ENCODE measurements at regions of chr12 and their contacts with region 1.

Region 1: DNA sequence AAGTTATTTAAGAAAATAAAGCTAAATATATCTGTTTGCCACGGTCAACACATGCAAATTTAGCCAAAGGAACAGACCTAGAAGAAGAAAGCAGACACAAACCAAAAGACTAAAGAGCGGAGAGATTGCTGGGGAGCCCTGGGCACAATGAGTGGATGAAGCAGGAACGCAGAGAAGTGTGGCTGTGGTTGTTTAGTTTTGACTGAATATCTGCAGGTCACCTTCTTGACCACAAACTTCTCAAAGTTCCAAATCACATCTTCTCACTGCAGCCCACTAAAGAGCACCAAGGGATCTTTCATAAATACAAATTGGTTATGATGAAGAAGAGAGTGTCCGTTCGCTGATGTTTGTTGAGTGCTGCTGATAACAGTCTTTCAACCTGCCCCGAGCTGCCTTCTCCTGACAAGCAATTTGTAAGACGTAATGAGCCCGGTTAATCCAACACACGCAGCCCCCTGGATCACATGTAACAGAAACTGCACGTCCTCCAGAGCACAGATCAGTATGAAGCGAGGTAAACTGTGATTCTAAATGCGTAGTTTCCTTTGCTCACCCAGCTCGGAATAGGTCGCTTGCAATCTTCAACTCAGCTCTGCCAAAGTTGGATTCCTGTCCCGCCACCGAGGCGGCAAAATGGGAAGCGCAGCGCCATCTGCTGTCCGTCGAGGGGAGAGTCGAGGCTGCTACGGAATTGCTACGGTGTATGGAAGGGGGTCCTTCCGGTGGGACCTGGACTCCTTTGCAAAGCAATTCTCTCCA is 120.8 kb downstream of the GXYLT1 start:
- DNase-seq: peak; percentile 12 to 86
- H3K4me3 ChIP-seq: peak overlapping the region; percentile 58 to 71
- H3K27ac ChIP-seq: no peak overlapping the region
- H3K4me1 ChIP-seq: no peaks in the 10 kb centered on the region
- H3K27me3 ChIP-seq: no peaks in the 10 kb centered on the region
- CTCF ChIP-seq: peak; percentile 73 to 96 (median 90)

Region 2: DNA sequence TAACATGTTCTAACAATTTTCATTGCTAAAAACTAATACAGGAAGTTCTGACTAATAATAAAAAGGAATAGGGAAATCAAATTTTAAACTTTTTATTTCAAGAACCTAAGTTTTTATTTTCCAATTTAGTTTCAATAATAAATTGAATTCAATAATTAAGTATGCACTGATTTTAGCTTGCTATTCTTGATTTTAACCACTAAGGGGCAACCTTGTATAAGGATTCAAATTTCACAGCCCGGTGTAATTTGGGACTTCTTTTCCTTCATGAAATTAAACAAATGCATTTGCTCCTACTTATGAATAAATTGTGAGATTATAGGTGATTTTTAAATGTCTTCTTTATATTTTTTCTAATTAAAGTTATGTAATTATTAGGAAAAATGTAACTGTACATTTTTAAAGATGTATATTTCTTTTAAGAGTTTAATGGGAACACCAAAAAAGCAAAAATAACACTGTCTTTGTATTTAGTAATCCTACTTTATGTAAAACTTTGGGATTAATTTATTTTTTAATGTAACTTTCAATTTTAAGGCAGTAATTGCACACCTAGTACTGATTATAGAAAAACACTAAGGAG is 1077.2 kb before region 1 on chr12:
- intact Hi-C with region 1: loop called (anchors 2 kb)
- DNase-seq: no peak
- H3K4me3 ChIP-seq: no peak overlapping the region
- H3K27ac ChIP-seq: no peak overlapping the region
- H3K4me1 ChIP-seq: no peaks in the 10 kb centered on the region
- H3K27me3 ChIP-seq: no peaks in the 10 kb centered on the region
- CTCF ChIP-seq: peak in 2 of 3 experiments; percentile 67 to 74

Region 3: GRCh38 chr12:41190338-41190737 is 833.6 kb before region 1 on chr12:
- intact Hi-C with region 1: loop called (anchors 10 kb)
- DNase-seq: no peak
- H3K4me3 ChIP-seq: peak overlapping the region; percentile 65 to 96
- H3K27ac ChIP-seq: peak overlapping the region; percentile 74 to 87
- H3K4me1 ChIP-seq: peaks cover 0 to 3% of the 10 kb centered on the region in 2 donors
- H3K27me3 ChIP-seq: no peaks in the 10 kb centered on the region
- CTCF ChIP-seq: peak in 2 of 3 experiments; percentile 51 to 65

Region 4: DNA sequence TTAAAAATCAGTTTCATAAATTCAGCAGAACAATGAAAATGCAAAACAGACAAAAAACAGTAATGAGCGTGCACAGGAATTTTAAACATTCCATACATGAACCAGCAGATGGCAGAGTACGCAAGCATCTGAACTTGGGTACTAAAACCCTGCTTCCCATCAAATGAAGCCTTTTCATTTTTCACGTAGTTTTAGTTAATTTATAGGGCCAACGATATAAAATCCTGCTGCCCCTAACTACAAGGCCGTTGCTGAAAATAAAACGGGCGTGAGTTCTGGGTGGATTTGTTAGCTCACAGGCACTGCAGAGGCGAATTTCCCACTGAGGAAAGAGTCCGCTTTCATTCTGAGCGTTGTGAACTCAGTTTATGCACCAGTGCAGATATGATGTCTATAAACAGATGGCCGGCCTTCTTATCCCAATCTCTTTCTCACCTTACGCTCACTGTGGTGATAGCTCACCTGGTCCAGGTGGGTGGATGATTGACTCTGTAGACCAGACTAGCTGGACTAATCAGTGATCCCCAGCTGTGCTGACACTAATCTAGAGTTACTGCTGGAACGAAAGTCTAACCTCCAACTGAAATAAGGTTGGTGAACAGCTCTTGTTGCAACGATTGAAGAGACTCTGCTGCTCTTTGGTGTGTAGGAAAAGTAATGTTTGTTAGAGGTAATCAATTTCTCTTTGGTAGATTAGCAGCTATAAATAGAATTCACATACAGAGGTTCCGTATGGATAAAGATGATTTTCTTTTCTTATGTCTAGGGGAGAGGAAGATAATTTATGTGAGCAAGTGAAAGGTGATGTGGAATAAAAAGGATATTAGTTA is 746.6 kb before region 1 on chr12:
- intact Hi-C with region 1: loop called (anchors 2 kb)
- DNase-seq: no peak
- H3K4me3 ChIP-seq: no peak overlapping the region
- H3K27ac ChIP-seq: no peak overlapping the region
- H3K4me1 ChIP-seq: no peaks in the 10 kb centered on the region
- H3K27me3 ChIP-seq: no peaks in the 10 kb centered on the region
- CTCF ChIP-seq: peak in 2 of 3 experiments; percentile 12 to 61

Region 5: GRCh38 chr12:41684997-41685396 is 338.9 kb before region 1 on chr12:
- intact Hi-C with region 1: loop called (anchors 1 kb)
- DNase-seq: no peak
- H3K4me3 ChIP-seq: no peak overlapping the region
- H3K27ac ChIP-seq: no peak overlapping the region
- H3K4me1 ChIP-seq: no peaks in the 10 kb centered on the region
- H3K27me3 ChIP-seq: no peaks in the 10 kb centered on the region
- CTCF ChIP-seq: peak in 1 of 3 experiments; percentile 51

Region 6: DNA sequence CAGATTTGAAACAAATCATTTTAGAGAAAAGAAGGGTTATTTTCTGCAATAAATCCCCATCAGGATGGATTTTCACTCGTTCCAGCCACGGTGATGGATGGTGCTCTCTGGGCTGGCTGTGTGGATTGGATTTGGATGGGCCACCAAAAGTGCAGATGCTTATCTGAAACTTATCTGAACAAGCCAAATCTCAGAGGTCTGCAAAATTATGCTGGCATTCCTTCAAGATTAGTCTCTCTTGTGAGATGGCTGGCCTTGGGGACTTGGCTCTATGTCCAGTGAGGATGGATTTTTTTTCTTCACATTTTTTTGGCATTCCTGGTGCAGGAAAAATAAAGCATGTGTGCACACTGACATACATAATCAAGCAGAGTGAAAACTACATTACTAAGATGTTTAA is 221.1 kb before region 1 on chr12:
- intact Hi-C with region 1: loop called (anchors 10 kb)
- DNase-seq: no peak
- H3K4me3 ChIP-seq: no peak overlapping the region
- H3K27ac ChIP-seq: no peak overlapping the region
- H3K4me1 ChIP-seq: no peaks in the 10 kb centered on the region
- H3K27me3 ChIP-seq: no peaks in the 10 kb centered on the region
- CTCF ChIP-seq: no peak

Region 7: DNA sequence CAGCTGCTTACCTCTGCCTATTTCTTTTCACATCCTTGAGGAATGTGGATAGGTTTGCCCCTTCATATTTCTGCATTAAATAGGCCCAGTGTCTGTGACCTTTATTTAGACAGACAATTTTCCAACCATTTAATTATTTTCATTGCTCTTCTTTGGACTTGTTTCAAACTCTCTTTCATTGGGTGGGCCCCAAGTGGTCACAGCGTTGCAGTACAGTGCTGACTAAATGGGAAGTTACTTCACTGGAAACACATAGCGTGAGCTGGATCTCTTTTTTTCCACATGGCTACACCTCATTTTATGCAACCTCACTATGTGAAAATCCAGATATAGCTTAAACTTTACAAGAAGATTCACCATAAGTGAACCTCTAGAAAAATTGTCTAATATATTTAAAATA is 1089.2 kb after region 1 on chr12:
- intact Hi-C with region 1: no loop called
- DNase-seq: no peak
- H3K4me3 ChIP-seq: no peak overlapping the region
- H3K27ac ChIP-seq: no peak overlapping the region
- H3K4me1 ChIP-seq: no peaks in the 10 kb centered on the region
- H3K27me3 ChIP-seq: no peaks in the 10 kb centered on the region
- CTCF ChIP-seq: no peak

Measured in ascending aorta (tissue), 2 donors.